ENCODE measurements at regions of chrX and their contacts with region 1.

Region 1: DNA sequence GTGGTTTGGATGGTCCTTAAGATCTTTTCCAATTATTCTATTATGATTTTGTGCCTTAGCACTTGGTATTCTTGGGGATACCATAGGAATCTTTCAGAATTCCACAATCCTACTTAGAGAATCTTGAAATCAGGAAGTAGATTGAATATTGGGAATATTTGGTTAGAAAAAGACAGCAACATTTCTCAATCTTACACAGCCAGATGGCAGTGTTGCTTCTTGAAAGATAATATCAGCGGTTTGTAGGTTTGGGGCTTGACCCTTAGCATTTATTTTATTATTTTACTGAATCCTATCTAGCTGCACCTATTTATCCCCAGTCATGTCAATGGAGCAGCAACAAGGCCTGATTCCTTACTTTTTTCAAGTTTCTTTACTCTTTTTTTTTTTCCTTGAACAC is 28.6 kb downstream of the MAGEB1 start:
- DNase-seq: no peak
- ATAC-seq: no peak
- H3K4me3 ChIP-seq: no peak overlapping the region
- H3K27ac ChIP-seq: no peak overlapping the region
- H3K4me1 ChIP-seq: no peaks in the 10 kb centered on the region
- H3K27me3 ChIP-seq: no peaks in the 10 kb centered on the region
- CTCF ChIP-seq: no peak
- POLR2A ChIP-seq: no peak

Region 2: DNA sequence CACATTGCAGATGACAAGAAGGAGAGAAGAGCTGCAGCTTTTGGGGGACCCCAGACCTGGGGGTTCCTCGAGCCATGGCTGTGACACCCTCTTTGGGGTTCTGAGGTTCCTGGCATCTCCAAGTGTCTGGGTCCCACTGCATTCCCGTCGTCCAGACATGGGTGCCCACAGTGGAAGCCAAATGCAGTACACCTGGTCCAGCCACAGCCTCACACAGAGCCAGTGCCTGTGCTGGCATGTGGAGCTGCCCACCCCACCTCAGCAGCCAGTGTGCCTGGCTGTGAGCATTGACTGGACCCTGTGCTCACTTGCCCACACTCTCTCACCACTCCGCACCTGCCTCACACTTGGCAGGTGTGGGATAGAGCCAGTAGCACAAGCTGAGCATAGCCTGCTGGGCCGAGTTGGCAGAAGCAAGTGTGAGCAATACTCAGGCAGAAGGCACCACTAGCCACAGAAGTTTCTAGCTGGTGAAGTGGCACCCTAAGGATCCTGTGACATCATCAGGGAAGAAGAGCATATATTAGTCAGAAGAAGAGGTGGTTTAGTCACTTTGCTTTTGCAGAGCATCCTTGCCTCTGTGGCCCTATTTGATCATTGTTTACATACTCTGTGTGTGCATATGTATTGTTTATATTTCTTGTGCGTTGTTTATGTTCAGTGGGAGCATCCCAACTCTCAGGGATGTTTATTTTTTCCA is 125.2 kb before region 1 on chrX:
- in situ Hi-C with region 1: no loop called
- intact Hi-C with region 1: no loop called
- DNase-seq: no peak
- ATAC-seq: no peak
- H3K4me3 ChIP-seq: no peak overlapping the region
- H3K27ac ChIP-seq: no peak overlapping the region
- H3K4me1 ChIP-seq: no peaks in the 10 kb centered on the region
- H3K27me3 ChIP-seq: no peaks in the 10 kb centered on the region
- CTCF ChIP-seq: no peak
- POLR2A ChIP-seq: no peak

Region 3: GRCh38 chrX:30196322-30196721 is 79.2 kb before region 1 on chrX:
- in situ Hi-C with region 1: loop called in 1 of 4 experiments (anchors 25 kb)
- intact Hi-C with region 1: no loop called
- DNase-seq: no peak
- ATAC-seq: no peak
- H3K4me3 ChIP-seq: no peak overlapping the region
- H3K27ac ChIP-seq: no peak overlapping the region
- H3K4me1 ChIP-seq: no peaks in the 10 kb centered on the region
- H3K27me3 ChIP-seq: no peaks in the 10 kb centered on the region
- CTCF ChIP-seq: no peak
- POLR2A ChIP-seq: no peak

Region 4: GRCh38 chrX:30215357-30215843 is 60.1 kb before region 1 on chrX and contains the start of gene MAGEB2:
- in situ Hi-C with region 1: no loop called
- intact Hi-C with region 1: no loop called
- DNase-seq: no peak
- ATAC-seq: no peak
- H3K4me3 ChIP-seq: no peak within 1 kb of the TSS
- H3K27ac ChIP-seq: no peak within 1 kb of the TSS
- H3K4me1 ChIP-seq: no peaks in the 10 kb centered on the region
- H3K27me3 ChIP-seq: no peaks in the 10 kb centered on the region
- CTCF ChIP-seq: no peak
- POLR2A ChIP-seq: no peak
- total RNA-seq, gene MAGEB2: not detected

Measured in gastrocnemius medialis (tissue), 4 donors.